Heart right ventricle (tissue), 16 donors: ENCODE measurements at regions of chr1 and their contacts with region 1.

Region 1: GRCh38 chr1:200075938-200076550 is 48.5 kb downstream of the NR5A2 start:
- DNase-seq: peak in 1 of 2 donors; percentile 73
- ATAC-seq: peak; percentile 54 to 95 (median 90)
- H3K4me3 ChIP-seq: peak overlapping the region in 4 of 10 donors; percentile 7 to 19 (median 9)
- H3K27ac ChIP-seq: peak overlapping the region; percentile 4 to 70 (median 46)
- H3K4me1 ChIP-seq: peaks cover 0 to 42% (median 28%) of the 10 kb centered on the region in 9 donors
- H3K27me3 ChIP-seq: peaks cover 0 to 8% (median 0%) of the 10 kb centered on the region in 7 donors
- CTCF ChIP-seq: no peak

Region 2: GRCh38 chr1:199976496-199977144 is 99.4 kb before region 1 on chr1:
- intact Hi-C with region 1: no loop called
- DNase-seq: no peak
- ATAC-seq: no peak
- H3K4me3 ChIP-seq: no peak overlapping the region
- H3K27ac ChIP-seq: no peak overlapping the region
- H3K4me1 ChIP-seq: peaks cover 0 to 15% (median 6%) of the 10 kb centered on the region in 9 donors
- H3K27me3 ChIP-seq: peaks cover 0 to 4% (median 0%) of the 10 kb centered on the region in 7 donors
- CTCF ChIP-seq: no peak

Region 3: DNA sequence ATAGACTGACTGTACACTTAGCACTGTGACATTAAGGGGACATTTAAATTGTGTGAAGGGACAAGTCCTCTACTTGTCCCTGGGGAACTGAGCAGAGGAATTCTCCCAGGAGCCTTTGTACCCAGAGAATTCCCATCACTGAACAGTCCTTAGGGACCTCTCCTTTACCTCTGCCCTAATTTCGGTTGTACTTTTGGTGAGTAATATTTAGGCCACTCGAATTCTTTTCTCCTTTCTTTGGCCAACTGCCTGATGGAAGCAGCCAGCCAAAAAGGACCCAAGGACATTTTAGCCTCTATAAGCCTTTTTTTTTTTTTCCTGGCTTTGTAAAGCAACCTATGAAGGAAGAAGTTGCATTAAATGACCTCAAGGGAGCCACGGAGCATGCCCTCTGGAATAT is 23.0 kb after region 1 on chr1:
- intact Hi-C with region 1: loop called in 1 of 10 experiments (anchors 2 kb)
- DNase-seq: peak in 1 of 2 donors; percentile 15
- ATAC-seq: peak; percentile 50 to 95 (median 66)
- H3K4me3 ChIP-seq: no peak overlapping the region
- H3K27ac ChIP-seq: peak overlapping the region in 6 of 10 donors; percentile 6 to 37 (median 31)
- H3K4me1 ChIP-seq: peaks cover 0 to 25% (median 14%) of the 10 kb centered on the region in 9 donors
- H3K27me3 ChIP-seq: no peaks in the 10 kb centered on the region
- CTCF ChIP-seq: no peak

Region 4: DNA sequence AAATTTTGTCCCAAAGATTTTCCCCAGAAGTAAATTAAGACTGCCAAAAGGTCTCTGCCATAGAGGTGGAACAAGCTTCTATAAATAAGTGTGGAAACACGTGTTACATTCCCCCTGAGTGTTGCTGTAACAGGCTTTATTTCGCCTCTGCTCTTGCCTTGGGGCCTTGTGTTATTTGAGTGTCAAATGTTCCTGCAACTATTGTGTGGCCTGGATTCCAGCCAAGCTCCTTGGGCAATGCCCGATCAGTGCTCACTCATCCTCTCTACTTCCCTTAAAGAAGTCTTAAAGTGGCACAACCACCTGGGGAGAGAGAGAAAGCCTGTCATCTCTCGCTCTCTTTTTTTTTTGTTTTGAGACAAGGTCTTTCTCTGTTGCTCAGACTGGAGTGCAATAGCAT is 108.2 kb after region 1 on chr1:
- intact Hi-C with region 1: loop called in 1 of 10 experiments (anchors 10 kb)
- DNase-seq: peak; percentile 59 to 79
- ATAC-seq: peak; percentile 89 to 98 (median 94)
- H3K4me3 ChIP-seq: no peak overlapping the region
- H3K27ac ChIP-seq: peak overlapping the region in 8 of 10 donors; percentile 4 to 68 (median 52)
- H3K4me1 ChIP-seq: peaks cover 0 to 26% (median 10%) of the 10 kb centered on the region in 9 donors
- H3K27me3 ChIP-seq: no peaks in the 10 kb centered on the region
- CTCF ChIP-seq: no peak